HAP-1 (cell line): ENCODE measurements at regions of chr1 and their contacts with region 1.

Region 1: GRCh38 chr1:2412519-2413233 is at the start of gene PEX10:
- DNase-seq: peak; percentile 91 to 99
- H3K4me3 ChIP-seq: peak within 1 kb of the TSS; percentile 78
- H3K4me1 ChIP-seq: peaks cover 13% of the 10 kb centered on the region
- H3K27me3 ChIP-seq: peaks cover 3% of the 10 kb centered on the region

Region 2: GRCh38 chr1:2545759-2546514 is 133.3 kb after region 1 on chr1:
- in situ Hi-C with region 1: loop called (anchors 5 kb)
- DNase-seq: peak; percentile 88 to 96
- H3K4me3 ChIP-seq: peak overlapping the region; percentile 37
- H3K4me1 ChIP-seq: peaks cover 45% of the 10 kb centered on the region
- H3K27me3 ChIP-seq: no peaks in the 10 kb centered on the region

Region 3: DNA sequence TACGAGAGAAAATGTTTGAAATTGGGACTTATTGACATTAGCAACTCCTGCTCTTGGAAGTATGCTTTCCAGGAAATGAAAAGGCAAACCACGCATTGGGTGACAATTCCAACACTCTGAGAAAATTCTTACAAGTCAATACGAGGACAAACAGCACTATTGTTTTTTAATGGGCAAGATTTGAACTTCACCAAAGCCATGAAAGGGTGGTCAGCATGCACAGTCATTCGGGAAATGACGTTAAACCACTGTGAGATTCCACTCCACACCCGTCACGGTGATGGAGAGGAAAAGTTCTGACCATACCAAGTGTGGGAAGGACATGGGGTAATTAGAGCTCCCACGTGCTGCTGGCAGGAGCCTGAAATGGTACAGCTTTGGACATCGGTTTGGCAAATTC is 161.7 kb after region 1 on chr1:
- in situ Hi-C with region 1: no loop called
- DNase-seq: no peak
- H3K4me3 ChIP-seq: no peak overlapping the region
- H3K4me1 ChIP-seq: no peaks in the 10 kb centered on the region
- H3K27me3 ChIP-seq: peaks cover 7% of the 10 kb centered on the region; the same call in 1 of the 2 replicates

Region 4: GRCh38 chr1:2586154-2587070 is 173.7 kb after region 1 on chr1 and contains the start of gene PRXL2B:
- in situ Hi-C with region 1: loop called (anchors 10 kb)
- DNase-seq: peak; percentile 97 to 99
- H3K4me3 ChIP-seq: peak within 1 kb of the TSS; percentile 65
- H3K4me1 ChIP-seq: peaks cover 2% of the 10 kb centered on the region; the same call in 1 of the 2 replicates
- H3K27me3 ChIP-seq: peaks cover 9% of the 10 kb centered on the region; the same call in 1 of the 2 replicates